Head of caudate nucleus (tissue), 42 donors: ENCODE measurements at regions of chr15 and their contacts with region 1.

Region 1: GRCh38 chr15:58066042-58066867 is 744 bp upstream of the ALDH1A2 start:
- DNase-seq: peak in 37 of 42 donors; percentile 5 to 75 (median 40)

Region 2: DNA sequence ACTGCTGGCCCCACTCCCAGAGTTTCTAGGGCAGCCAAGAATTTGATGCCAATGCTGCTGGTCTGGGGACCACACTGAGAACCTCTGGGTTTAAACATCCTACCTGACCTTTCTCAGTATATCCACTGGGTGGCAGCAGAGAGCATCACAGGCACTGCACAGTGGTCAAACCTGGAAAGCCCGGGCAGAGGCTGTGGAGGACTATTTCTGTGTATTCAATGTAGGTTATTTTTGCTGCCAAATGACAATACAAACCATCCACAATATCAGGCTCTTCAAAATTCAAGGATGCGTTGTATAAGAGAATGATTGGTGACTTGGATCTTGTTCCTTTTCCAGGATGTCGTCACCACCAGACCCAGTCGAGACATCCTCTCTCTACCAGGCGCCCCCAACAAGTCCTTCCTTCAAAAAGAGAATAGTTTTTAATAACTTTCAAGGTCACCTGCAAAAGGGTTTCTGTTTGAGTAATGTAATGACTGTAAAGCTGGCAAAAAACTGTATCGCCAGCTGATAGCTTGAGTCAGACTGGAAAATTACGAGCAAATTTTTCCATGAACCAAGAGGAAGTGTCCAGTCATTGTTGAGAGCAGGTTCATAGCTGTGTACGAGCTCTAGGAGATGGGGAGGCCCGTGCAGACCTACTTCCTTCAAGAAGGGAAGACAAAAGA is 505.1 kb before region 1 on chr15:
- intact Hi-C with region 1: loop called (anchors 10 kb)
- DNase-seq: peak in 41 of 42 donors; percentile 22 to 88 (median 70)

Region 3: DNA sequence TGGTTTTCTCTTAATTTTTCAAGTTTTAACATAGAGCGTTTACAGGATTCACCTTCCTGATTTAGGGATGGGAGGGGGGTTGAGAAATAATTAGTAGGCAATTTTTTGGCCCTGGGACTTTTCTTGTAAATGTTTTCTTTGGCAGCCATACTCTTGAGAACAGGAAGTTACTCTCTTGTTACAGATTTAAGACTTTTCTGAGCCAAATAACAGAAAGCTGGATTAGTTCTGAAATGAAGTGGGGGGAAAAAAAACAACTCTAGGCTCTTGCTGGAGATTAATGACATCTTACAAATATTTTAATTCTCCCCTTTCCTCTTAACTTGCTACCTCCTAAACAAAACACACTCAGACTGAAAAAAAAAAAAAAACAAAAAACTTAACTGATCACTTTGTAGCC is 373.5 kb before region 1 on chr15:
- intact Hi-C with region 1: no loop called
- DNase-seq: no peak

Region 4: GRCh38 chr15:57751177-57751800 is 315.0 kb before region 1 on chr15:
- intact Hi-C with region 1: loop called (anchors 5 kb)
- DNase-seq: peak in 22 of 42 donors; percentile 16 to 70 (median 44)

Region 5: DNA sequence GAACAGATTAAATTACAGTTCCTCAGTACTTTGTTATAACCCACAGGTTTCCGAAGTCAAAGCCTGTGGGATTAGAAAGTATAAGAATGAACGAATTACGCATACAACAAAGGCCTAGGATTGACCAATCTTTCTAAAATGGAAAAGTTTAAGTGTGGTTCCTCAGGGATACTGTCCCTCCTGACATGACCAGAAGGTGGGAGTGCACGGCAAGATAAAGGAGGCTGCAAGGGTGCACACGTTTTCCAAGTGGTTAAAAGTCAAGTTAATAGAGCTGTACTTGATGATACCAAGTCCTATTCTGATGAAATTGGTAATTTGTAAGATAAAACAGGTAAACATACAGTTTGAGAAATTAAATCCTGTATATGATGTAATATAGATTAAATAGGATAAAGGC is 96.9 kb before region 1 on chr15:
- intact Hi-C with region 1: no loop called
- DNase-seq: no peak